ENCODE measurements at regions of chr12 and their contacts with region 1.

Region 1: GRCh38 chr12:71663561-71664294 is at the start of gene ZFC3H1:
- DNase-seq: peak; percentile 93 to 94
- H3K4me3 ChIP-seq: peak within 1 kb of the TSS; percentile 61 to 99 (median 79)
- H3K27ac ChIP-seq: peak within 1 kb of the TSS; percentile 85 to 96 (median 94)
- H3K4me1 ChIP-seq: peaks cover 18 to 24% of the 10 kb centered on the region in 2 donors
- H3K27me3 ChIP-seq: no peaks in the 10 kb centered on the region
- CTCF ChIP-seq: peak in 2 of 6 experiments; percentile 10 to 17
- POLR2A ChIP-seq: peak; percentile 71 to 95
- total RNA-seq, gene ZFC3H1: 45.2 to 62.4 (median 50.0) TPM

Region 2: GRCh38 chr12:71754461-71755145 is 90.9 kb after region 1 on chr12 and contains the start of gene RAB21:
- intact Hi-C with region 1: loop called (anchors 10 kb)
- DNase-seq: peak; percentile 99
- H3K4me3 ChIP-seq: peak within 1 kb of the TSS; percentile 57 to 72 (median 60)
- H3K27ac ChIP-seq: peak within 1 kb of the TSS; percentile 86 to 88 (median 87)
- H3K4me1 ChIP-seq: peaks cover 0 to 4% of the 10 kb centered on the region in 2 donors
- H3K27me3 ChIP-seq: no peaks in the 10 kb centered on the region
- CTCF ChIP-seq: peak in 4 of 6 experiments; percentile 7 to 50 (median 34)
- POLR2A ChIP-seq: peak; percentile 70 to 96
- total RNA-seq, gene RAB21: 16.0 to 55.1 (median 28.1) TPM

Measured in thyroid gland (tissue), 4 donors.